Gastrocnemius medialis (tissue), 4 donors: ENCODE measurements at regions of chr17 and their contacts with region 1.

Region 1: GRCh38 chr17:50114849-50115357 is 15.1 kb downstream of the SAMD14 start:
- DNase-seq: no peak
- ATAC-seq: no peak
- H3K4me3 ChIP-seq: no peak overlapping the region
- H3K27ac ChIP-seq: peak overlapping the region in 1 of 4 donors; percentile 99
- H3K4me1 ChIP-seq: peaks cover 30 to 53% of the 10 kb centered on the region in 2 donors
- H3K27me3 ChIP-seq: no peaks in the 10 kb centered on the region
- CTCF ChIP-seq: peak; percentile 31 to 61 (median 42)
- POLR2A ChIP-seq: no peak

Region 2: DNA sequence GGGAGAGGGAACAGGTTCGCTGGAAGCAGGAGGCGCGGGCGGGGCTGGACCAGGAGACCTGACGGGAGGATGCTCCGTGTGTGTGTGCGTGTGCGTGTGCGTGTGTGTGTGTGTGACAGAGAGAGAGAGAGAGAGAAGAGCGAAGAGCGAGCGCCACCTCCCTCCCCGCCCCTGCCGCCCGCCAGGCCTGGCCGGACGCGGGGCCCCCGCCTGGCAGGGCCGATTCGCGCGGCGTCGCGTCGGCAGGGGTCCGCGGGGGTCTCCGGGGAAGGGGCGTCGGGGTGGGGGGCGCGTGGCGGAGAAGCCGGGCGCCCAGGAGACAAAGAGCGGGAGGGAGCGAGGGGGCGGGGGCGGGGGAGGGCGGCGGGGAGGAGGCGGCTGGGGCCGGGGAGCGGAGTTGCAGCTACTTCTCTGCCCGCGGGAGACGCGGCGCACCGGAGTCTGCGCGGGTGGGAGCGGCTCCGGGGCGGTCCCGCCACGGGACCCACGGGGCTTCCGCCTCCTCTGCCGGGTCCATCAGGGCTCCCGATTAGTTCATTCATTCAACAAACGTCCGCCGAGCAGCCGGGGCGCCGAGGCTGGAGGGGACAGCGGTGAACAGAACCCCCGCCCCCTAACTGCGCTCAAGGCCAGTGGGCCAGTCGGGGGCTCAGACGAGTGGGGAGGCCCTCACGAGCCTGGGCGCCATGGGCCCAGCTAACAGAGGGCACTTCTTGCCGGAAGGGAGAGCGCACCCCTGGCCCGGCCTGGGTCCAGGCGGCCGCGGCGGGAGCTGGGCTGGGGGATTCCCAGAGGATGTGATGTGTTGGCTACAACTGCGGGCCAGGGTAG is 15.0 kb after region 1 on chr17 and contains the start of gene SAMD14:
- in situ Hi-C with region 1: no loop called
- intact Hi-C with region 1: loop called (anchors 2 kb)
- DNase-seq: no peak
- ATAC-seq: no peak
- H3K4me3 ChIP-seq: peak within 1 kb of the TSS; percentile 52 to 64 (median 54)
- H3K27ac ChIP-seq: peak within 1 kb of the TSS; percentile 53 to 95 (median 92)
- H3K4me1 ChIP-seq: peaks cover 30 to 46% of the 10 kb centered on the region in 2 donors
- H3K27me3 ChIP-seq: peaks cover 0 to 4% (median 0%) of the 10 kb centered on the region in 3 donors
- CTCF ChIP-seq: no peak
- POLR2A ChIP-seq: no peak
- total RNA-seq, gene SAMD14: 0.04 to 3.8 (median 0.31) TPM in 3 of 4 donors, not detected in the other

Region 3: DNA sequence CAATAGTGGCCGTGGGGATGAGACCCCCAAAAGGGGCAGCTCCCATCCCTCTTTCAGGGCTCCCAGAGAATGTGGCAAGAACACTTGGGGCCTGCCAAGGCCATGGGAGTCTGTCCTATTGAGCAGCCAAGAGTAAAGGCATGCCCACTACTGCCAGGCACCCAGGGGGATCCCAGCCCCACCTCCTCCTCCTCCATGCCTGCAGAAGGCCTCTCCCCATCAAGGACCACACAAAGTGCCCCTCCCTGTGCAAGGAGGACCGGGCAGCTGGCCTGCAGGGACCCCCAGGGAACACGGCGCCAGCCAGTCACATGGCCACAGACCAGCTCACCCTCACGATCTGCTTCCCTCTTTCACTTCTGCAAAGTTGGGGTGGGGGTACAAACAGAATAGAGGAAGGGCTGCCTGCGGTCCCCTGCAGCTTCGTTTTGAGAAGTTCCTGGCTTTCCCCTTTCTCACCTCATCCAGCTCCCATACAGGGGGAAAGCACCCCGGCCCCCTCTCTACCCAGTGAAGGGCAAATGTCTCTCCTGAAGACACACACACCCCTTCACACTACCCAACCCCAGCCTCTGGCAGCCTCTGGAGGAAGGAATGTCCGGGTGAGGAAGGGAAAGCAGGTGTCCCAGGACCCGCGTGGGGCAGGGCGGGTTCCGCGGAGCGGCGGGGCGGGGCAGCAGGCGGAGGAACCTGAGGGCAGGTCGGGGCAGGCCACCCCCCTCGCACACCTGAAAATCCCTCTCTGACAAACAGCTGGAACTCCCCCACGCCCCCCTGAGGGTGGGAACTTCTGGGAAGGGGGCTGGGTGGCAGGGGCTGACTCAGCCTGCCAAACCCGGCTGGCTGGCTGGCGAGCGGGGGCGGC is 33.6 kb after region 1 on chr17:
- in situ Hi-C with region 1: no loop called
- intact Hi-C with region 1: loop called (anchors 5 kb)
- DNase-seq: peak in 1 of 2 donors; percentile 60
- ATAC-seq: peak in 1 of 2 donors; percentile 11
- H3K4me3 ChIP-seq: peak overlapping the region; percentile 76 to 95 (median 84)
- H3K27ac ChIP-seq: peak overlapping the region; percentile 85 to 93 (median 91)
- H3K4me1 ChIP-seq: peaks cover 52 to 55% of the 10 kb centered on the region in 2 donors
- H3K27me3 ChIP-seq: no peaks in the 10 kb centered on the region
- CTCF ChIP-seq: peak in 1 of 5 experiments; percentile 33
- POLR2A ChIP-seq: no peak

Region 4: GRCh38 chr17:50161023-50161910 is 46.4 kb after region 1 on chr17:
- in situ Hi-C with region 1: no loop called
- intact Hi-C with region 1: loop called (anchors 1 kb)
- DNase-seq: peak; percentile 81 to 85
- ATAC-seq: peak; percentile 67 to 70
- H3K4me3 ChIP-seq: peak overlapping the region; percentile 52 to 73 (median 62)
- H3K27ac ChIP-seq: peak overlapping the region; percentile 53 to 69 (median 60)
- H3K4me1 ChIP-seq: peaks cover 27 to 39% of the 10 kb centered on the region in 2 donors
- H3K27me3 ChIP-seq: no peaks in the 10 kb centered on the region
- CTCF ChIP-seq: peak; percentile 94 to 97 (median 95)
- POLR2A ChIP-seq: peak; percentile 36 to 38

Region 5: GRCh38 chr17:50177983-50178834 is 63.3 kb after region 1 on chr17:
- in situ Hi-C with region 1: no loop called
- intact Hi-C with region 1: no loop called
- DNase-seq: peak; percentile 70 to 93
- ATAC-seq: peak; percentile 90 to 91
- H3K4me3 ChIP-seq: peak overlapping the region in 1 of 4 donors; percentile 21
- H3K27ac ChIP-seq: peak overlapping the region; percentile 98 to 100 (median 99)
- H3K4me1 ChIP-seq: peaks cover 26 to 39% of the 10 kb centered on the region in 2 donors
- H3K27me3 ChIP-seq: no peaks in the 10 kb centered on the region
- CTCF ChIP-seq: peak in 4 of 5 experiments; percentile 50 to 67 (median 54)
- POLR2A ChIP-seq: peak in 1 of 2 donors; percentile 48